ENCODE measurements at regions of chr5 and their contacts with region 1.

Region 1: GRCh38 chr5:132495667-132496190 is 5.2 kb upstream of the IRF1 start:
- DNase-seq: peak; percentile 79
- ATAC-seq: peak; percentile 63
- H3K4me3 Mint-ChIP-seq: peak overlapping the region; percentile 92
- H3K27ac Mint-ChIP-seq: peak overlapping the region; percentile 96
- H3K4me1 Mint-ChIP-seq: peaks cover 64% of the 10 kb centered on the region
- H3K27me3 Mint-ChIP-seq: no peaks in the 10 kb centered on the region
- CTCF ChIP-seq: no peak

Region 2: GRCh38 chr5:132375957-132376356 is 119.8 kb before region 1 on chr5:
- CTCF ChIA-PET with region 1: interaction called, 5 read pairs
- POLR2A ChIA-PET with region 1: interaction called, 12 read pairs
- intact Hi-C with region 1: no loop called
- DNase-seq: no peak
- ATAC-seq: no peak
- H3K4me3 Mint-ChIP-seq: no peak overlapping the region
- H3K27ac Mint-ChIP-seq: no peak overlapping the region
- H3K4me1 Mint-ChIP-seq: peaks cover 13% of the 10 kb centered on the region
- H3K27me3 Mint-ChIP-seq: no peaks in the 10 kb centered on the region
- CTCF ChIP-seq: no peak

Region 3: GRCh38 chr5:132410451-132411381 is 85.0 kb before region 1 on chr5:
- CTCF ChIA-PET with region 1: interaction called, 36 read pairs
- POLR2A ChIA-PET with region 1: interaction called, 246 read pairs
- intact Hi-C with region 1: loop called (anchors 1 kb)
- DNase-seq: peak; percentile 85
- ATAC-seq: peak; percentile 86
- H3K4me3 Mint-ChIP-seq: peak overlapping the region; percentile 94
- H3K27ac Mint-ChIP-seq: peak overlapping the region; percentile 99
- H3K4me1 Mint-ChIP-seq: peaks cover 75% of the 10 kb centered on the region
- H3K27me3 Mint-ChIP-seq: no peaks in the 10 kb centered on the region
- CTCF ChIP-seq: no peak

Region 4: DNA sequence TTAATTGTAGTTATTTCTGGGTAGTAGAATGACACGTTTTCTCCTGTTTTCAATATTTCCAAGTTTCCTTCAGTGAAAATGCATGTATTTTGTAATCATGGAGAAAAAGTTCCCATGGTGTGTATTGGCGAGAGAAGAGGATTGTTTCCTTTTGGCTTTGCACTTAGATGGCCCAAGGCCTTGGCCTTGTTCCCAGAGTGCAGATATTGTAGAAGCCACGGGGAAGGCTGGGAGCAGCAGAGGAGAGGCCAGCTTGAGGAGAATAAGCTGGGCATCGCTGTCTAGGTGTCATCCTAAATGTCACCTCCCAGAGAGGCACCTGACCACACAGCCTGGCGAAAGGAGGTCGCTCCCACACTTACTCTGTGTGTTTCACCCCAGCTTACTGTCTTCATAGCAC is 49.1 kb before region 1 on chr5:
- CTCF ChIA-PET with region 1: interaction called, 3 read pairs
- POLR2A ChIA-PET with region 1: interaction called, 13 read pairs
- intact Hi-C with region 1: no loop called
- DNase-seq: no peak
- ATAC-seq: no peak
- H3K4me3 Mint-ChIP-seq: no peak overlapping the region
- H3K27ac Mint-ChIP-seq: no peak overlapping the region
- H3K4me1 Mint-ChIP-seq: peaks cover 56% of the 10 kb centered on the region
- H3K27me3 Mint-ChIP-seq: no peaks in the 10 kb centered on the region
- CTCF ChIP-seq: no peak

Region 5: GRCh38 chr5:132473019-132473531 is 22.7 kb before region 1 on chr5:
- CTCF ChIA-PET with region 1: interaction called, 25 read pairs
- POLR2A ChIA-PET with region 1: interaction called, 286 read pairs
- intact Hi-C with region 1: loop called (anchors 1 kb)
- DNase-seq: peak; percentile 50
- ATAC-seq: peak; percentile 87
- H3K4me3 Mint-ChIP-seq: peak overlapping the region; percentile 50
- H3K27ac Mint-ChIP-seq: peak overlapping the region; percentile 91
- H3K4me1 Mint-ChIP-seq: peaks cover 78% of the 10 kb centered on the region
- H3K27me3 Mint-ChIP-seq: no peaks in the 10 kb centered on the region
- CTCF ChIP-seq: no peak

Region 6: DNA sequence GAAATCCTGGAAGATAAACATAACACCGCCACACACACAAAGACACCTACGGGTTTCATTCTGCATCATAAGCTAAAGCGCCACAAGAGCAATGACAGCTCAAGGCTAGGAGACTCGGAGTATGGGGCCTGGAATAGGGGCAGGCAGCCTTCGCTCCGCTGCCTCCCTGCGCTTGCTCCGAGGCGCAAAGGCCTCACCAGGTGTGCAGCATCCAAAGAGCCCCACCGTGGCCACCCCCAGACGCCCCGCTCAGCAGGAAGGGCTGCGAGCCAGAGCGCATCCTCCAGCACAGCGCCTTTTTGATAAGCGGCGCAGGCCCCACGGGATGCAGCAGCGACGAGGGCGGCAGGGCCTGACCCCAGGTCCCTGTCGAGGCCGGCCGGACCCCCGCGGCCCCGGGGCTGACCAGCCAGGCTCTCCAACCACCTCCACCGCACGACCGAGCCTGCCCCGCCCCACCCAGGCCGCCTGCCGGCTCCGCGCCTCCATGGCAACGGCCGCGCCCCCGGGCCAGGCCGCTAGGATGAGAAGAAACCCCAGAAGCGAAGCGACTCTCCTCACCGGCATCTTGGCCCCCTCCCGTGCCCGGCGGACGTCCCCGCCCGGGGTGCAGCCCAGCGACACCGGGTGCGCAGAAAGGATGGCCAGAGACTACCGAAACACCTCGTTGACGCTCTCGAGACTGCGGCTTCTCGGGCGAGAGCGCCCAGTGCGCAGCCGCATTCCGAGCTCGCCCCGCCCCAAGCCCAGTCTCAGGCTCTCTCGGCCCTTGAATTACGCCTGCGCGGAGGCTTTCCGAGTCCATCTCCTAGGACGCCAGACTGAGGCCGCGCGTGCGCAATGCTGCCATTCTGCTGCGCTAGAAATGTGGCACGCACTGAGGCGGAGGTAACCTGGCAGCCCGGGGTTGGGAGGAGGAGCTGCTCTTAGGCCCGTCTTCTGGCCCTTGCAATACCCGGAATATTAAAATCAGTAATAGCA is 241.4 kb after region 1 on chr5 and contains the start of gene KIF3A:
- CTCF ChIA-PET with region 1: no interaction called
- POLR2A ChIA-PET with region 1: interaction called, 11 read pairs
- intact Hi-C with region 1: no loop called
- DNase-seq: peak; percentile 98
- ATAC-seq: peak; percentile 92
- H3K4me3 Mint-ChIP-seq: peak within 1 kb of the TSS; percentile 90
- H3K27ac Mint-ChIP-seq: peak within 1 kb of the TSS; percentile 87
- H3K4me1 Mint-ChIP-seq: peaks cover 18% of the 10 kb centered on the region
- H3K27me3 Mint-ChIP-seq: peaks cover 5% of the 10 kb centered on the region
- CTCF ChIP-seq: no peak
- total RNA-seq, gene KIF3A: 9.2 and 9.8 TPM in 2 replicates

Measured in activated B cell treated with CpG ODN at 0.5 μM for 24 hours (primary cell).